Naive thymus-derived CD4-positive, alpha-beta T cell (primary cell): ENCODE measurements at regions of chr2 and their contacts with region 1.

Region 1: DNA sequence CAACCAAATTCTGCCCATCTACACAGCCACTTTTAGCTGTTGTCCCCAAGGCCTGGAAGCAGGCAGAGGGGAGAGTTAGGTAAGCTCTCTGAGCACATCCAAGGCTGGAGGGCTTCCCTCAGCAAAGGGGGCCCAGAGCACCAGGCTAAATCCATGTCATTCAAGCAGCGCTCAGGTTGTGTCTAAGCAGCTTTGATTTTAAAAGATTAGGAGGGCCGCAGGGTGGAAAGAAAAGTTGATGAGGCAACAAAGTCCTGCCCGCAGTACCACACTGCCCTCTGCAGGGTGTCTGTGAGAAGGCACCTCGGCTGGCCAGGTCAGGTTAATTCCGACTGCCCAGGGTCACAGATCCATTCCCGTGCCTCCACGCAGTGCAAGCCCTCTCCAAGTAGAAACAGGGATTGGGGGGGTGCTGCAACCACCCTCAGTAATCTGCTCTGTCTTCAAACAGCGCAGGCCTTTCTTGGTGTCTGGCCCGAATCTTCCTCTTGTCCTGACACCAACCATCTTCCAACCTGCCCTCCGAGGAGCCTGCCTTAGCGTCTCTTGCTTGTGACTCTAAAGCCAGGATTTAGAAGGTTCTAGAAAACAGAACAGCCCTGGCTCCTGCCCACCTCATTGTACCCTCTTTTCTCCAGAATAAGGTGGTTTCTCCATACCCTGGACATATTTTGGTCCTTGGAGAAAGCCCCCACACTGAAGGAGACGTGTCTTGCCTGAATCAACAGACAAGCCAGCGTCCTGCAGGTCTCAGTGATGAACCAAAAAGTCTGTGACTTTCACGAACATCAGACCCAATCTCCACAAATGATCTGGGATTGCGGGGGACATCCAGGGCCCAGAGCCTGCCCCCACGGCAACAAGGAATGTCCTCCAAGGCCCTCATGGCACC is 289.2 kb downstream of the TNS1 start:
- DNase-seq: peak; percentile 42 to 77 (median 66)
- ATAC-seq: peak; percentile 84
- H3K4me3 ChIP-seq: no peak overlapping the region
- H3K4me3 Mint-ChIP-seq: no peak overlapping the region
- H3K27ac ChIP-seq: no peak overlapping the region
- H3K27ac Mint-ChIP-seq: no peak overlapping the region
- H3K4me1 ChIP-seq: peaks cover 0 to 3% of the 10 kb centered on the region in 2 donors
- H3K4me1 Mint-ChIP-seq: peaks cover 0 to 13% (median 5%) of the 10 kb centered on the region in 7 donors
- H3K27me3 ChIP-seq: no peaks in the 10 kb centered on the region
- H3K27me3 Mint-ChIP-seq: peaks cover 0 to 7% (median 4%) of the 10 kb centered on the region in 5 donors

Region 2: GRCh38 chr2:216683846-216684507 is 1029.7 kb before region 1 on chr2:
- CTCF ChIA-PET with region 1: interaction called, 27 read pairs
- POLR2A ChIA-PET with region 1: no interaction called
- intact Hi-C with region 1: loop called (anchors 1 kb)
- DNase-seq: no peak
- ATAC-seq: peak; percentile 59
- H3K4me3 ChIP-seq: no peak overlapping the region
- H3K4me3 Mint-ChIP-seq: no peak overlapping the region
- H3K27ac ChIP-seq: no peak overlapping the region
- H3K27ac Mint-ChIP-seq: no peak overlapping the region
- H3K4me1 ChIP-seq: no peaks in the 10 kb centered on the region
- H3K4me1 Mint-ChIP-seq: peaks cover 0 to 13% (median 0%) of the 10 kb centered on the region in 7 donors
- H3K27me3 ChIP-seq: peaks cover 0 to 3% of the 10 kb centered on the region in 2 donors
- H3K27me3 Mint-ChIP-seq: peaks cover 21 to 52% (median 29%) of the 10 kb centered on the region in 5 donors

Region 3: DNA sequence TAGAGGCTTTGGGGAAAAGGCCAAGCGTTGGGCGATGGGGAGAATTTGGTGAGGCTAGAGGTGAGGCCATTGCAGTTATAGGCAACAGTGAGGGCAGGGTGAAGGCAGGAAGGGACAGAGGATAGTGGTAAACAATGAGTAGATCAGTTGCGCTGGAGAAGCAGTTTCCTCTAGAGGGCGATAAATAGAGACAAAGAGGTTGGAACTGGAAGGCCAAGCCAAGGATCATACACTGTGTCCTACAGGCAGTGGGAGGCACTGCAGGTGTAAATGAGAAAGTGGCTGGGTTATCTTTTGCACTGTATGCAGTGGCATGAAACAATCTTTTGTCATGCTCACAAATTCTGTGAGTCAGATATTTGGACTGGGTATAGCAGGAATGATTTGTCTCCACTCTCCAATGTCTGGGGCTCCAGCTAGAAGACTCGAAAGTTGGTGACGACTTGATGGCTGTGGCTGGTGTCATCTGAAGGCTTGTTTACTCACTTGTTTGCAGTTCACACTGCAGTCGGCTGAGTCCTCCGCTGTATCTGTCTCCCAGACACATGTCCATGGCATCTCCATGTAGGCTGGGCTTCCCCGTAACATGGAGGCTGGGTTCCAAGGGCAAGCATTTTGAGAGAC is 935.9 kb before region 1 on chr2:
- CTCF ChIA-PET with region 1: interaction called, 3 read pairs
- POLR2A ChIA-PET with region 1: no interaction called
- intact Hi-C with region 1: loop called in 1 of 2 experiments (anchors 5 kb)
- DNase-seq: peak in 3 of 9 donors; percentile 2 to 30 (median 24)
- ATAC-seq: peak; percentile 76
- H3K4me3 ChIP-seq: no peak overlapping the region
- H3K4me3 Mint-ChIP-seq: no peak overlapping the region
- H3K27ac ChIP-seq: no peak overlapping the region
- H3K27ac Mint-ChIP-seq: peak overlapping the region in 1 of 9 donors; percentile 8
- H3K4me1 ChIP-seq: no peaks in the 10 kb centered on the region
- H3K4me1 Mint-ChIP-seq: peaks cover 0 to 12% (median 0%) of the 10 kb centered on the region in 7 donors
- H3K27me3 ChIP-seq: no peaks in the 10 kb centered on the region
- H3K27me3 Mint-ChIP-seq: peaks cover 7 to 11% (median 8%) of the 10 kb centered on the region in 5 donors

Region 4: DNA sequence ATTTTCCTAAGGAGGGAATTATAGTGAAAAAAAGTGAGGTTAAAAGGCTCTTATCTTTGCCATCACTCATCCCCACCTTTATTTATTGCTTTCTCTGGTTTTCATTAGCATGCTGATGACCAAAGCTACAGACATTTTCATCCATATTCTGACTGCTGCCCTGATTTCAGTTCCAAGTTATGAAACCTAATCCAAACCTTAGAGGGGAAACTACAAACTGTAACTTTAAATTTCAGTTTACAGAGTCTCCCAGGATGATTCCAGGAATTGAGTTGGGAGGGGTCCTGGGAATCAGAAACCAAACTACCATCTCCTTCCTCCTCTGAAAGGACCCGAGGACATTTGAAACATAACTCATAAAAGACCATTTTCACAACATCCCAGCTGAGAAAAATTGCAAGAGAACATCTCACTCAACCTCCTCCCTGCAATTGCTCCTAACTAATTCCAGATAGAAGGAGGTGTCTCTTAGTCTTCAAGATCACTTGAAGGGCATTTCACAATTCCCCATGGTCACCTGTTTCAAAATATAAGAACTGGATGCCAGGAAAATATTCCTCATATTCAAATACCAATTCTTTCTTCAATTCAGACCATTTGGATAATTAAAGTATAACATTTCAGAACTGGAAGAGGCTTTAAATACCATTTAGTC is 231.5 kb before region 1 on chr2:
- CTCF ChIA-PET with region 1: no interaction called
- POLR2A ChIA-PET with region 1: no interaction called
- intact Hi-C with region 1: no loop called
- DNase-seq: no peak
- ATAC-seq: no peak
- H3K4me3 ChIP-seq: no peak overlapping the region
- H3K4me3 Mint-ChIP-seq: no peak overlapping the region
- H3K27ac ChIP-seq: no peak overlapping the region
- H3K27ac Mint-ChIP-seq: no peak overlapping the region
- H3K4me1 ChIP-seq: no peaks in the 10 kb centered on the region
- H3K4me1 Mint-ChIP-seq: no peaks in the 10 kb centered on the region
- H3K27me3 ChIP-seq: no peaks in the 10 kb centered on the region
- H3K27me3 Mint-ChIP-seq: peaks cover 0 to 7% (median 0%) of the 10 kb centered on the region in 5 donors

Region 5: DNA sequence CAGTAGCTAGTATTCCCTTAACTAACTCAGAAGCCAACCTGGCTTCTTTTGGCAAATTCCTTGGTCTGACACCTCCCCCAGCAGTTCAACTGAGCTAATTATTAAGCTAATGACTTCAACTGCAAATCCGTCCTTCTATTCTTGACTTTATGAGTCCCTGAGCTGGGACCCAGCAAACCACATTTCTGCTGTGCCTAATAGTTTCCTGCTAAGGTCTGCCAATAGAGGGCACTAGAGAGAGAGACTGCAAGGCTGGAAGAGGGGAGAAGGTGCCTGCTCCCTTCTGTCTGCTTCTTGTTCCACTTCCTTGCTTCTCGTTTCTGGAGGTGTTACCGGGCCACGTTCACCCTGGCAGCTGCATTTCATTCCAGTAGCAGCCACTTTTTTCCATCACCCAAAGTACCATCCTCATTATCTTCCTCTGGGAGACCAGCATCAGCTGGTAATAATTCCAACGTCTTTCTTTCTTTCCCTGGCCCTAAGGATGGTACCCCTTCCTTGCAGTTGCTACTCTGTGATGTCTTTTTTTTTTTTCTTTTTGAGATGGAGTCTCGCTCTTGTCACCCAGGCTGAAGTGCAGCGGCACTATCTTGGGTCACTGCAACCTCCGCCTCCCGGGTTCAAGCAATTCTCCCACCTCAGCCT is 62.8 kb before region 1 on chr2:
- CTCF ChIA-PET with region 1: interaction called, 4 read pairs
- POLR2A ChIA-PET with region 1: no interaction called
- intact Hi-C with region 1: loop called in 1 of 2 experiments (anchors 2 kb)
- DNase-seq: peak in 5 of 9 donors; percentile 23 to 42 (median 24)
- ATAC-seq: peak; percentile 56
- H3K4me3 ChIP-seq: no peak overlapping the region
- H3K4me3 Mint-ChIP-seq: no peak overlapping the region
- H3K27ac ChIP-seq: no peak overlapping the region
- H3K27ac Mint-ChIP-seq: peak overlapping the region in 1 of 9 donors; percentile 43
- H3K4me1 ChIP-seq: no peaks in the 10 kb centered on the region
- H3K4me1 Mint-ChIP-seq: peaks cover 0 to 7% (median 2%) of the 10 kb centered on the region in 7 donors
- H3K27me3 ChIP-seq: no peaks in the 10 kb centered on the region
- H3K27me3 Mint-ChIP-seq: no peaks in the 10 kb centered on the region

Region 6: GRCh38 chr2:217836901-217837491 is 123.4 kb after region 1 on chr2:
- CTCF ChIA-PET with region 1: no interaction called
- POLR2A ChIA-PET with region 1: no interaction called
- intact Hi-C with region 1: no loop called
- DNase-seq: no peak
- ATAC-seq: no peak
- H3K4me3 ChIP-seq: no peak overlapping the region
- H3K4me3 Mint-ChIP-seq: no peak overlapping the region
- H3K27ac ChIP-seq: no peak overlapping the region
- H3K27ac Mint-ChIP-seq: peak overlapping the region in 1 of 9 donors; percentile 7
- H3K4me1 ChIP-seq: no peaks in the 10 kb centered on the region
- H3K4me1 Mint-ChIP-seq: no peaks in the 10 kb centered on the region
- H3K27me3 ChIP-seq: no peaks in the 10 kb centered on the region
- H3K27me3 Mint-ChIP-seq: peaks cover 0 to 6% (median 0%) of the 10 kb centered on the region in 5 donors